ENCODE measurements at regions of chr12 and their contacts with region 1.

Region 1: DNA sequence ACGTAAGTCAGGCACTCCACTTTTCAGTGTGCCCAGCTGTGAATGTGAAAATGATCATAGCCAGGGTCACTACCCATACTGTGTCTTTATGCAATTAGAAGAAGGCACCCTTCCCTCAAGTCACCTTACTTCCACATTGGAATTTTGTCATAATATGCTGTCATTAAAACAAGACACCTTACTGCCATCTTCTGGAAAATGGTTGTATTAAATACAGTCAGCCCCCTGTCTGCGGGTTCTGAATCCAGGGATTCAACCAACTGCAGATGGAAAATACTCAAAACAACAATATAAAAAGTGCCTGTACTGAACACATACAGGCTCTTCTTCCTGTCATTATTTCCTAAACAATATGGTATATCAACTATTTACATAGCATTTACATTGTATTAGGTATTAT is 70.2 kb upstream of the TBX5 start:
- DNase-seq: no peak
- ATAC-seq: peak in 3 of 4 donors; percentile 36 to 64 (median 50)
- H3K4me3 ChIP-seq: no peak overlapping the region
- H3K27ac ChIP-seq: no peak overlapping the region
- H3K4me1 ChIP-seq: peaks cover 0 to 15% (median 6%) of the 10 kb centered on the region in 12 donors
- H3K27me3 ChIP-seq: peaks cover 6 to 60% (median 24%) of the 10 kb centered on the region in 9 donors
- CTCF ChIP-seq: peak; percentile 12 to 70 (median 56)
- POLR2A ChIP-seq: no peak

Region 2: DNA sequence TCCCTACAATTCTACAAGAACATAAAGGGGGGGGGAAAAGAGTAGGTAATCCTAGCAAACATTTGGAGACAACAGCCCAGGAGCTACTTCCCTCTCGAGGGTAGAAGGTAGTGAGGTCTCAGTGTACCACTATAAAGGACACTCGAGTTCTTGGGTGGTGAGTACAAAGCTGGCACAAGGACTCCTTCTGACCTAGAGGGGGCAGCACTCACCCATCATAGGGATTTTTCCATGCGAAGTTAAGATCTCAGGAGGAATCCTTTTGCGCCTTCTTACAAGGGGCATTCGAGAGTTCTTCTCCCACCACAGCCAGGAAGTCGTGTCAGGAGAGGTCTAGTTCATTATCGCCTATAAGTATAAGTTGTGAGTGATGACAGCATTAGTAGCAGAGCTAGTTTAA is 309.8 kb before region 1 on chr12:
- intact Hi-C with region 1: loop called (anchors 1 to 10 kb)
- DNase-seq: peak in 4 of 5 donors; percentile 29 to 38 (median 30)
- ATAC-seq: peak; percentile 48 to 82 (median 74)
- H3K4me3 ChIP-seq: no peak overlapping the region
- H3K27ac ChIP-seq: no peak overlapping the region
- H3K4me1 ChIP-seq: peaks cover 0 to 3% (median 0%) of the 10 kb centered on the region in 12 donors
- H3K27me3 ChIP-seq: peaks cover 0 to 8% (median 0%) of the 10 kb centered on the region in 9 donors
- CTCF ChIP-seq: peak; percentile 42 to 77 (median 66)
- POLR2A ChIP-seq: no peak

Region 3: GRCh38 chr12:114245555-114245954 is 230.6 kb before region 1 on chr12:
- intact Hi-C with region 1: loop called in 4 of 10 experiments (anchors 2 to 5 kb)
- DNase-seq: no peak
- ATAC-seq: peak in 3 of 4 donors; percentile 41 to 59 (median 48)
- H3K4me3 ChIP-seq: no peak overlapping the region
- H3K27ac ChIP-seq: no peak overlapping the region
- H3K4me1 ChIP-seq: peaks cover 0 to 2% (median 0%) of the 10 kb centered on the region in 12 donors
- H3K27me3 ChIP-seq: peaks cover 0 to 15% (median 3%) of the 10 kb centered on the region in 9 donors
- CTCF ChIP-seq: peak in 8 of 12 donors; percentile 8 to 39 (median 26)
- POLR2A ChIP-seq: no peak

Region 4: GRCh38 chr12:114339626-114340025 is 136.5 kb before region 1 on chr12:
- intact Hi-C with region 1: loop called in 1 of 10 experiments (anchors 10 kb)
- DNase-seq: no peak
- ATAC-seq: no peak
- H3K4me3 ChIP-seq: no peak overlapping the region
- H3K27ac ChIP-seq: no peak overlapping the region
- H3K4me1 ChIP-seq: peaks cover 0 to 4% (median 0%) of the 10 kb centered on the region in 12 donors
- H3K27me3 ChIP-seq: peaks cover 0 to 4% (median 0%) of the 10 kb centered on the region in 9 donors
- CTCF ChIP-seq: no peak
- POLR2A ChIP-seq: no peak

Region 5: DNA sequence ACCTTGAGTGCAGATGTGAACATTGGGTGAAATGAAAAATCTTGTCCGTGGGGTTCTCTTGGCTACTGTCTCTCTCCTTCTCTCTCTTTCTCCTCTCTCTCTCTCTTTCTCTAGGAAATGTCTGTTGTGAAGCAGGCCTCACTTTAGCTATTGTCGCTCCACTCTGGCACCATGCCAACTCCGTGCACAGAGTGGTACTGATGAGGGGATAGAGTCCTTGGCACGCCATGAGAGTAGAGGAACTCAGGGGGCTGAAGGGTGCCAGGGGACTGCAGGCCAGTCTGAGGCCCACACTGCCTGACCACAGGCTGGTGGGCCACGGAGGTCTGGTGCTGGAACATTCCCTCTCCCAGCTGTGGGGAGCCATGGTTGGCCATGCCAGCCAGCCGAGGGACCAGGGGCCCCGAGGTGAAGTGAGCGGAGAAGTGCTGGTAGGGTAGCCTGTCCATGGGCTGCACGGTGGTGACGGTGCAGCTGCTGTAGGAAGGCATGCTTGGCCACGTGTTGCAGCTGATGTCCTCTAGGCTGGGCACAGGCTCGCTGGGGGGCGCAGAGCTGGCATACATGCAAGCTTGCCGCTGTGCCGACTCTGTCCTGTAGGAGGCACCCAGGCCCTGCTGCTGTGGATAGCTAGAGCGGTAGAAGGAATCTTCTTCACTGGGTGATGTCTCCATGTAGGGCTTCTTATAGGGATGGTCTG is 120.6 kb before region 1 on chr12:
- intact Hi-C with region 1: loop called in 8 of 10 experiments (anchors 2 to 10 kb)
- DNase-seq: peak in 4 of 5 donors; percentile 33 to 69 (median 52)
- ATAC-seq: peak; percentile 58 to 88 (median 84)
- H3K4me3 ChIP-seq: no peak overlapping the region
- H3K27ac ChIP-seq: peak overlapping the region in 4 of 12 donors; percentile 11 to 38 (median 28)
- H3K4me1 ChIP-seq: peaks cover 0 to 13% (median 0%) of the 10 kb centered on the region in 12 donors
- H3K27me3 ChIP-seq: no peaks in the 10 kb centered on the region
- CTCF ChIP-seq: peak in 10 of 12 donors; percentile 28 to 63 (median 43)
- POLR2A ChIP-seq: no peak

Region 6: DNA sequence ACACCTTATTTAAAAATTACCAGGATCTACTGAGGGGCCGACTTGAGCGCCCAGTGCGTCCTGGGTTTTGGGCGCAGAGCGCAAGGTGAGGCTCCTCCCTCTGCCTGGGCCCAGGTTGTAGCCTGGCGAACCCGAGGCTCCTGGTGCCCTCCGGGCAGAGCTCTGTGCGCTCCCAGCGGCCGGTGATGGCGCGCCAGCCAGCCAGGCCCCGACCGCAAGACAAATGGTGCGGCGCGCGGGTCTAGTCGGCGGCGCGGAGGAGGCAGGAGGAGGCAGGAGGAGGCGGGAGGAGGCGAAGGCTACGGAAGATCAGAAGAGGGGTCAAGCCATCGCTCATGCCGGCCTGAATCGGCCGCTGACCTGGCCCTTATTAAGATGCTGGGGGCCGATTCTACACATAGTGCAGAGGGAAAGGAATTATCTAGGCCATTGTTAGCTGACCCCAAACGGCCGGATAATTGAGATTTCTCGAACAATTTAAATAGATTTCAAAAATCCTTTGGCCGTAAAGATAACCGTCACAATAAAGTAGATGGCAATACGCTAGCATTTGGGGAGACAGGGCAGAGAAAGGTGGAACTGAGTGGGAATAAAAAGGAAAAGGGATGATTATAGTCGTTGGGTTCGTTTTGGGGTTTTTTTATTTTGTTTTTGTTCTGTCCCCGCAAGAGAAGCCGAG is 73.0 kb before region 1 on chr12:
- intact Hi-C with region 1: loop called in 2 of 10 experiments (anchors 5 to 10 kb)
- DNase-seq: peak in 4 of 5 donors; percentile 56 to 80 (median 75)
- ATAC-seq: peak; percentile 30 to 63 (median 62)
- H3K4me3 ChIP-seq: peak overlapping the region; percentile 6 to 88 (median 62)
- H3K27ac ChIP-seq: peak overlapping the region; percentile 69 to 96 (median 91)
- H3K4me1 ChIP-seq: peaks cover 0 to 39% (median 6%) of the 10 kb centered on the region in 12 donors
- H3K27me3 ChIP-seq: peaks cover 0 to 98% (median 3%) of the 10 kb centered on the region in 9 donors
- CTCF ChIP-seq: peak in 10 of 12 donors; percentile 9 to 44 (median 24)
- POLR2A ChIP-seq: no peak

Region 7: GRCh38 chr12:114408886-114409851 is 67.0 kb before region 1 on chr12:
- intact Hi-C with region 1: loop called in 2 of 10 experiments (anchors 5 to 10 kb)
- DNase-seq: peak; percentile 39 to 80 (median 65)
- ATAC-seq: peak; percentile 12 to 48 (median 39)
- H3K4me3 ChIP-seq: peak overlapping the region; percentile 15 to 88 (median 65)
- H3K27ac ChIP-seq: peak overlapping the region; percentile 57 to 96 (median 90)
- H3K4me1 ChIP-seq: peaks cover 0 to 29% (median 12%) of the 10 kb centered on the region in 12 donors
- H3K27me3 ChIP-seq: peaks cover 0 to 97% (median 0%) of the 10 kb centered on the region in 9 donors
- CTCF ChIP-seq: peak in 4 of 12 donors; percentile 6 to 15 (median 9)
- POLR2A ChIP-seq: no peak

Region 8: DNA sequence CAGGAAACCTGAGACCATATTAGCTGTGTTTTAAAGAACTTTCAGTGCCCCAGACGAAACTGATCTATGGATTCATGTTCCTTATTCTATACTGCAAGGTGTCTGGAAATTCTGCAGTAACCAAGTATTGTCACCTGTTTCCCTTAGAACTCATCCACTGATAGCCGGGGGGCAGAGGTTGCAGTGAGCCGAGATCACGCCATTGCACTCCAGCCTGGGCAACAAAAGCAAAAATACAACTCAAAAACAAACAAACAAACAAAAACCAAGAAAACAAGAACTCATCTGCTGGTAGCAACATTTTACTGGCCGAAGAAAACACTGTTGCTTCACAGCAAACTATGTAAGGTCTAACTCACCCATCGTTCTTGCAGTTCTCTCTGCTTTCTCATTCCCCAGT is 44.1 kb after region 1 on chr12:
- intact Hi-C with region 1: no loop called
- DNase-seq: no peak
- ATAC-seq: no peak
- H3K4me3 ChIP-seq: no peak overlapping the region
- H3K27ac ChIP-seq: no peak overlapping the region
- H3K4me1 ChIP-seq: no peaks in the 10 kb centered on the region
- H3K27me3 ChIP-seq: peaks cover 0 to 24% (median 0%) of the 10 kb centered on the region in 9 donors
- CTCF ChIP-seq: no peak
- POLR2A ChIP-seq: no peak

Measured in heart left ventricle (tissue), 16 donors.